ENCODE measurements at regions of chr9 and their contacts with region 1.

Region 1: DNA sequence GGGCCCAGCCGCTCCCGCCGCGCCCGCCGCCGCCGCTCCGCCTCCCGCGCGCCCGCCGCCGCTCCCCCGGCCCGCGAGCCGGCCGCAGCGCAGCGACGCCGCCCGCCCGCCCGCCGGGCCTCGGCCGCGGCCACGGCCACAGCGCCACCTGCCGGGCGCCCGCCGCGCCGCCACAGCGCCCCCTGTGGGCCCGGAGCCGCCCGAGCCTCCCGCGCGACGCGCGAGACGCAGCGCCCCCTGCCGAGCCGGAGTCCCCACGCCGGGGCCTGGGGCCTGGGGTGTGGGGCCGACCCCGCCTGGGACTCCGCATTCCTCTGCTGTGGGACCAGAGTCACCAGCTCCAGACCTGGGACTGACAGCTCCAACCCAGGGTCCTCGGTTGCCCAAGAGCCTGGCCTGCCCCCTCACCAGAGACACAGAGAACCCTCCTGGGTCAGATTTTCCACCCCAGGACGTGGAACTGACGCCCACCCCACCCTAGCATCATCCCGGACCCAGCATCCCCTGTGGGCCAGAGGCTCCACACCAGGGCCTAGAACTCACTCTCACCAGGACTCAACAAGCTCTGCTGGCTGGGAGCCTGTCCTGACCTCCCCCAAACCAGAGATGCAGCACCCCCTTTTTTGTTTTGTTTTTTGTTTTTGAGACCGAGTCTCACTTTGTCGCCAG is at the start of gene RAPGEF1:
- DNase-seq: peak; percentile 99
- ATAC-seq: peak; percentile 70
- H3K4me3 Mint-ChIP-seq: peak within 1 kb of the TSS; percentile 94
- H3K27ac Mint-ChIP-seq: peak within 1 kb of the TSS; percentile 83
- H3K4me1 Mint-ChIP-seq: peaks cover 55% of the 10 kb centered on the region
- H3K27me3 Mint-ChIP-seq: no peaks in the 10 kb centered on the region
- total RNA-seq, gene RAPGEF1: 129 to 131 TPM

Region 2: GRCh38 chr9:131590908-131591844 is 148.9 kb before region 1 on chr9:
- POLR2A ChIA-PET with region 1: interaction called, 11 read pairs
- DNase-seq: peak; percentile 83
- ATAC-seq: peak; percentile 85
- H3K4me3 Mint-ChIP-seq: peak overlapping the region; percentile 50
- H3K27ac Mint-ChIP-seq: peak overlapping the region; percentile 90
- H3K4me1 Mint-ChIP-seq: peaks cover 27% of the 10 kb centered on the region
- H3K27me3 Mint-ChIP-seq: no peaks in the 10 kb centered on the region

Region 3: GRCh38 chr9:131755541-131756198 is 15.6 kb after region 1 on chr9:
- POLR2A ChIA-PET with region 1: no interaction called
- DNase-seq: peak; percentile 87
- ATAC-seq: peak; percentile 100
- H3K4me3 Mint-ChIP-seq: no peak overlapping the region
- H3K27ac Mint-ChIP-seq: peak overlapping the region; percentile 51
- H3K4me1 Mint-ChIP-seq: peaks cover 6% of the 10 kb centered on the region
- H3K27me3 Mint-ChIP-seq: peaks cover 38% of the 10 kb centered on the region

Measured in activated naive CD8-positive, alpha-beta T cell treated with anti-CD3 and anti-CD28 coated beads, Interleukin-2, amount 10 ng/mL, durations not matched to agents 7 days and 5 days (primary cell).